ENCODE measurements at regions of chr16 and their contacts with region 1.

Region 1: DNA sequence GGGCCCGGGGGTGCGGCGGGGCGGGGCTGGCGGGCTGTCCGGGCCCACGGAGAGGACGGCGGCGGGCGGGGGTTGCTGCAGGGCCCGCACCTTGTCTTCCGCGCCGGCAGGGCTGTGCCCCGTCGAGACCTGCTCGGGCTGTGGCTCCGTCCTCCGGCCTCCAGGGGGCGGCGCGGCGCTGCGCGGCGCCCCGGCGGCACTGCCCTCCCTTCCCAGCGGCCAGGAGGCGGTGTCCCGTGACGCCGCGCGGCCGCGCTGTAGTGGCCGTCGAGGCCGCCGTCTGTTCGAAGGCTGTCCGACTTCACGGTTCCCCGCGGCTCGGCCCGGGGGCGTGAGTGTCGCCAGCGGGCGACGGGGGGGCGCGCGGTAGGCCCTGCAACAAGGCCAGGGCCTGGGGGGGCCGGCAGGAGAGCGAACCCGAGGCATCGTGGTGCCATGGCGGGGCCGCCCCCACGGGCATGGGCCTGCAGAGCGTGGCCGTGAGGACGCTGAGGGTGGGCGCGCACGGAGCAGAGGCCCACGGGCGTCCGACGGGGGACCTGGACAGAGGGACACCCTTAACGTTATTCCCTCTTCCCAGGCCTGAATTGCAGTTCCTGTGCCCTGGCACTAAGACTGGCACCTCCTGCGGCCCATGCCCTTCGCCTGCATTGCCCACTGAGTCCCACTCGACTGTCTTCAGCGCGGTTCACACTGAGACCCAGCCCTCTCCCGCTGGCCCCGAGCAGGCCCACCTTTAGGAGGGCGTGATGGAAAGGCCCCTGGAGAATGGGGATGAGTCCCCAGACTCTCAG is at the start of gene PLEKHG4:
- DNase-seq: peak; percentile 58 to 78
- H3K4me3 ChIP-seq: peak within 1 kb of the TSS; percentile 75
- H3K27ac ChIP-seq: peak within 1 kb of the TSS; percentile 65; the same call in 1 of the 2 replicates
- H3K4me1 ChIP-seq: peaks cover 28% of the 10 kb centered on the region
- H3K27me3 ChIP-seq: no peaks in the 10 kb centered on the region
- CTCF ChIP-seq: peak; percentile 56; the same call in 1 of the 2 replicates
- total RNA-seq, gene PLEKHG4: 14.0 and 17.3 TPM in 2 replicates

Region 2: DNA sequence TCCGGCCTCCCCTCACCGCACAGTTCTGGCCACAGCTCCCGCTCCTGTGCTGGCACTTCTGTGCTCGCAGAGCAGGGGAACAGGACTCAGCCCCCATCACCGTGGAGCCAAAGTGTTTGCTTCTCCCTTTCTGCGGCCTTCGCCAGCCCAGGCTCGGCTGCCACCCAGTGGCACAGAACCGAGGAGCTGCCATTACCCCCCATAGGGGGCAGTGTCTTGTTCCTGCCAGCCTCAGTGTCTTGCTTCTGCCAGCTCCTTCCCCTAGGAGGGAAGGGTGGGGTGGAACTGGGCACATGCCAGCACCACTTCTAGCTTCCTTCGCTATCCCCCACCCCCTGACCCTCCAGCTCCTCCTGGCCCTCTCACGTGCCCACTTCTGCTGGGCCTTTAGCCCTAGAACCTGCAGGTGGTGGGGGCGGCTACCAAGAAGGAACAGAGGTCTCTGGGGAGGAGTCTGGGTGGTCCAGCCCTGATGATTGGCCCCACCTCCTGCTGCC is 81.2 kb before region 1 on chr16:
- CTCF ChIA-PET with region 1: no interaction called
- POLR2A ChIA-PET with region 1: no interaction called
- intact Hi-C with region 1: no loop called
- DNase-seq: peak; percentile 43 to 74
- H3K4me3 ChIP-seq: peak overlapping the region; percentile 89; the same call in 1 of the 2 replicates
- H3K27ac ChIP-seq: peak overlapping the region; percentile 75
- H3K4me1 ChIP-seq: peaks cover 49% of the 10 kb centered on the region
- H3K27me3 ChIP-seq: no peaks in the 10 kb centered on the region
- CTCF ChIP-seq: peak; percentile 78

Region 3: GRCh38 chr16:67236563-67237395 is 42.7 kb before region 1 on chr16:
- CTCF ChIA-PET with region 1: no interaction called
- POLR2A ChIA-PET with region 1: no interaction called
- intact Hi-C with region 1: no loop called
- DNase-seq: peak in 1 of 2 experiments; percentile 58
- H3K4me3 ChIP-seq: no peak overlapping the region
- H3K27ac ChIP-seq: no peak overlapping the region
- H3K4me1 ChIP-seq: peaks cover 24% of the 10 kb centered on the region
- H3K27me3 ChIP-seq: no peaks in the 10 kb centered on the region
- CTCF ChIP-seq: no peak

Region 4: GRCh38 chr16:67246934-67247697 is 32.4 kb before region 1 on chr16 and contains the start of gene FHOD1:
- CTCF ChIA-PET with region 1: interaction called, 6 read pairs
- POLR2A ChIA-PET with region 1: interaction called, 7 read pairs
- intact Hi-C with region 1: loop called (anchors 2 kb)
- DNase-seq: peak; percentile 84 to 98
- H3K4me3 ChIP-seq: peak within 1 kb of the TSS; percentile 90
- H3K27ac ChIP-seq: peak within 1 kb of the TSS; percentile 76
- H3K4me1 ChIP-seq: peaks cover 45% of the 10 kb centered on the region
- H3K27me3 ChIP-seq: no peaks in the 10 kb centered on the region; the same call in 1 of the 2 replicates
- CTCF ChIP-seq: 0 out of 2 replicates have a peak, but pooled peaks have one; percentile 39
- total RNA-seq, gene FHOD1: 58.2 and 60.0 TPM in 2 replicates

Region 5: GRCh38 chr16:67260426-67261075 is 18.9 kb before region 1 on chr16:
- CTCF ChIA-PET with region 1: interaction called, 16 read pairs
- POLR2A ChIA-PET with region 1: no interaction called
- intact Hi-C with region 1: loop called (anchors 1 kb)
- DNase-seq: peak; percentile 48 to 53
- H3K4me3 ChIP-seq: no peak overlapping the region
- H3K27ac ChIP-seq: no peak overlapping the region
- H3K4me1 ChIP-seq: no peaks in the 10 kb centered on the region
- H3K27me3 ChIP-seq: no peaks in the 10 kb centered on the region
- CTCF ChIP-seq: peak; percentile 61

Region 6: DNA sequence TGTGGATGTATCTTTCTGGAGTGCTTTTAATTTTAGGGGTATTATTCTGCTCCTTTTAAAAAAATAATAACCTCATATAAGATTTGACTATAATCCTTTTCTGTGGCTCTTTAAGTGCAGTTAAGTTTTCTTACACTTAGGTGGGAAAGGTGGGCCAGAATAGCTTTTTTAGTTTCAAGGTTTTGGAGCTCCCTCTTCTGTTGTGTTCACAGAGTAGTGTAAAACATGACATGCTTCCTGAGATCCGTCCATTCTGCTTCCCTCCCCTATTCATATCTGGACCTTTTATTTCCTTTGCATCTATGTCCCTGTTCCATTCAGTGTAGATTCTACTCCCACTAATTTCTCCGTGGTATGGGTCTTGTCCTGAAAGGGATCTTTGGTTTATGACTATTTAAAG is 60.0 kb after region 1 on chr16:
- CTCF ChIA-PET with region 1: no interaction called
- POLR2A ChIA-PET with region 1: no interaction called
- intact Hi-C with region 1: loop called (anchors 5 kb)
- DNase-seq: no peak
- H3K4me3 ChIP-seq: no peak overlapping the region
- H3K27ac ChIP-seq: no peak overlapping the region
- H3K4me1 ChIP-seq: no peaks in the 10 kb centered on the region
- H3K27me3 ChIP-seq: no peaks in the 10 kb centered on the region
- CTCF ChIP-seq: no peak

Region 7: DNA sequence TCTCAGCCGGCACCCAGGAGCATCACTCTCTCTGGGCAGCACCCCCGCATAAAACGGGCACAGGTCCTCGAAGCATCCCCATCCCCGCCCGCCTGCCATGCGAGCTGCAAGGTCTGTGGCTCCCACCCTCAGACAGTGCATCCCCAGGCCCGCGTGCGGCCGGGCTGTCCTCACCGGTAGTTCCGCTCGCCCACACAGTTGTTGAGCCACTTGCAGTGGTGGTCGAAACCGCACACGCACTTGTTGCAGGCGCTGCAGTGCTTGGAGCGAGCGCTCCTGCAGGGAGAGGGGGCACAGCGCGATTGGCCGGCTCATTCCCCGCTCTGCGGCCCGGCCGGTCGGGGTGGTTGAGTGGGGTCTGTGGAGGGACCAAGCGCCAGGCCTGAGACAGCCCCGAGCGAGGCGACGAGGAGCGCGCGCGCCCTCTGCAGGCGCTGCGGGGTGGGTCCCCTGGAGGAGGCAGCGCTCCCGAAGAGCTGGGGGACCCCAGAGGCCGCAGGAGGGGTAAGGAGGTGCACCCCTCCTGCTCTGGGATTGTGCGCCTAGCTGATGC is 119.8 kb after region 1 on chr16:
- CTCF ChIA-PET with region 1: interaction called, 6 read pairs
- POLR2A ChIA-PET with region 1: interaction called, 8 read pairs
- intact Hi-C with region 1: loop called (anchors 5 kb)
- DNase-seq: peak in 1 of 2 experiments; percentile 46
- H3K4me3 ChIP-seq: no peak overlapping the region
- H3K27ac ChIP-seq: no peak overlapping the region
- H3K4me1 ChIP-seq: peaks cover 25% of the 10 kb centered on the region
- H3K27me3 ChIP-seq: no peaks in the 10 kb centered on the region
- CTCF ChIP-seq: no peak

Region 8: GRCh38 chr16:67415872-67416793 is 136.6 kb after region 1 on chr16 and contains the start of gene ZDHHC1:
- CTCF ChIA-PET with region 1: interaction called, 3 read pairs
- POLR2A ChIA-PET with region 1: interaction called, 3 read pairs
- intact Hi-C with region 1: loop called (anchors 1 kb)
- DNase-seq: peak in 1 of 2 experiments; percentile 72
- H3K4me3 ChIP-seq: peak within 1 kb of the TSS; percentile 62
- H3K27ac ChIP-seq: no peak within 1 kb of the TSS
- H3K4me1 ChIP-seq: peaks cover 8% of the 10 kb centered on the region
- H3K27me3 ChIP-seq: no peaks in the 10 kb centered on the region
- CTCF ChIP-seq: peak; percentile 76
- total RNA-seq, gene ZDHHC1: 12.8 and 14.9 TPM in 2 replicates

Region 9: GRCh38 chr16:67470359-67470758 is 190.9 kb after region 1 on chr16:
- CTCF ChIA-PET with region 1: no interaction called
- POLR2A ChIA-PET with region 1: no interaction called
- intact Hi-C with region 1: loop called (anchors 5 kb)
- DNase-seq: no peak
- H3K4me3 ChIP-seq: no peak overlapping the region
- H3K27ac ChIP-seq: no peak overlapping the region
- H3K4me1 ChIP-seq: 0 out of 2 replicates have a peak, but pooled peaks cover 4% of the 10 kb centered on the region
- H3K27me3 ChIP-seq: no peaks in the 10 kb centered on the region
- CTCF ChIP-seq: no peak

Measured in PC-9 (cell line).